PC-3 (cell line): ENCODE measurements at regions of chr11 and their contacts with region 1.

Region 1: GRCh38 chr11:6737872-6738466 is 33.8 kb downstream of the OR2AG2 start:
- DNase-seq: peak; percentile 74
- ATAC-seq: peak; percentile 76
- H3K4me3 ChIP-seq: no peak overlapping the region
- H3K27ac ChIP-seq: no peak overlapping the region
- H3K4me1 ChIP-seq: 0 out of 2 replicates have a peak, but pooled peaks cover 4% of the 10 kb centered on the region
- H3K27me3 ChIP-seq: peaks cover 9% of the 10 kb centered on the region
- CTCF ChIP-seq: peak; percentile 72

Region 2: DNA sequence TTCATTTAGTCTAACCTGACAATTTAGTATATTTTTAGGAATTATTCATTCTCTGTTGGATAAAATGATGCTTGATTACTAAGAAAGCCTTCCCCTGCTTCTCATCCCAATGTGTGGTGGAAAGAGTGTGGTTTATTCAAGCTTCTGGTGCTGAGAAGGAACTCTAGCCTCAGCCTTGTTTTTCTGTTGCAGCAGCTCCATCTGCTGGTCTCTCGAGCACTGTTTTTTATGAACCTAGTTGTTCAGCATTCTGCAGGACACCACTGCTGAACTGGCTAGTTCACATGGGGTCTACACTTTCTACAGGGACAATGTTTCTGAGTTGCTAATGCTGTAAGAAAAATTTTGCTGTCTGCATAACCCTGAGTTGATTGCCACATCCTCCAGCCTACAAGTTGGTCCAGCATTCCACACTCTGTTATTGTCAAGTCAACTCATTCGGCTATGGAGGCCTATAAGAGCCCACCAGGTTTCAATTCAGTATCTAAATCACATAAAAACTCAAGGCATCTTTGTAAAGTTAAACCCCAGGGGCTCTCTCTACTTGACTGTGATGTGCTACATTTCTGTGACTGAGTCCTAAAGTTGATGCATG is 19.5 kb after region 1 on chr11:
- CTCF ChIA-PET with region 1: interaction called, 5 read pairs
- POLR2A ChIA-PET with region 1: no interaction called
- intact Hi-C with region 1: loop called (anchors 1 kb)
- DNase-seq: peak; percentile 58
- ATAC-seq: peak; percentile 89
- H3K4me3 ChIP-seq: no peak overlapping the region
- H3K27ac ChIP-seq: no peak overlapping the region
- H3K4me1 ChIP-seq: no peaks in the 10 kb centered on the region
- H3K27me3 ChIP-seq: no peaks in the 10 kb centered on the region
- CTCF ChIP-seq: peak; percentile 62